AG04450 (cell line): ENCODE measurements at regions of chr12 and their contacts with region 1.

Region 1: DNA sequence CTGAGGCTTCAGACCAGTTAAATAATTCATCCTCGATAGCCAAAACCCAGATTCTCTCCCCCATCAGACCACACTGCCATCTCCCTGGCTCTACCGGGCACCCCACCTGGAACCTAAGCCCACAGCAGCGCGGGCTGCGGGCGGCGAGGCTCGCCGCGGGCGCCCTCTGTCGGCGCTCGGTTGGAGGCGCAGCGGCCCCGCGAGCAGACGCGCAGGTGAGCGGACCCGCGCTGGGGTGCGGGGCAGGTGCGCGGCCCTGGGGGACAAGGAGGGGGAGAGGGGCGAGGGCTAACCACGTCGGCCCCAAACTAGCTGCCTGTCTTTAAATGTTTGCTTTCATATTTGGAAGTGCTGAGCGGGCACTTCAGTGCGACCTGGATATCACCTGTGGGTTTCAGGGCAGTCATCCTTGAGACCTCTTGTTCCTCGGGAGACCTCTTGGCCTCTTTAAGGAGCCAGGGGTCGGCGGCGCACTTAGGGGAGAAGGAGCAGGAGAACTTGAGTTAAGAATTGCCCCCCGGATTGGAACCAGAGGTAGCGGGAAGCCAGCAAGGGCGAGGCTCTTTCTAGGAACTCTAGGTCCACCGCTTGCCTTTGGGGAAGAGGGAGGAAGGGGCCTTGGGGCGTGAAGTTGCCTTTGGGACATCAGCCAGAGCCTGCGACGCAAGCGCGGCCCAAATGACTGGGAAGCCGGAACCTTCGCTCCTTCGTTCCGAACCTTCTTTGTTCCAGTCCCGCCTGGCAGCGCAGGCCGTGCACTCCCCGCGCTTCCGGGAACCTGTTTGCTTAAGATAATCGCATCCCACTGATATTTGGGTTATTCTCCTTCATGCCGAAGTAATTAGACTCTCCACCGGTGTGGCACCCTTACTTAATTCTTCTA is 78.7 kb downstream of the NEDD1 start:
- DNase-seq: no peak
- H3K4me3 ChIP-seq: peak overlapping the region; percentile 47
- H3K27ac ChIP-seq: no peak overlapping the region
- H3K27me3 ChIP-seq: peaks cover 23% of the 10 kb centered on the region
- CTCF ChIP-seq: peak; percentile 55

Region 2: GRCh38 chr12:96578526-96579125 is 407.1 kb before region 1 on chr12:
- CTCF ChIA-PET with region 1: interaction called, 28 read pairs
- POLR2A ChIA-PET with region 1: no interaction called
- DNase-seq: peak; percentile 33
- H3K4me3 ChIP-seq: no peak overlapping the region
- H3K27ac ChIP-seq: no peak overlapping the region
- H3K27me3 ChIP-seq: no peaks in the 10 kb centered on the region
- CTCF ChIP-seq: peak; percentile 72